Activated naive CD4-positive, alpha-beta T cell treated with anti-CD3 and anti-CD28 coated beads for 36 hours (primary cell): ENCODE measurements at regions of chr19 and their contacts with region 1.

Region 1: DNA sequence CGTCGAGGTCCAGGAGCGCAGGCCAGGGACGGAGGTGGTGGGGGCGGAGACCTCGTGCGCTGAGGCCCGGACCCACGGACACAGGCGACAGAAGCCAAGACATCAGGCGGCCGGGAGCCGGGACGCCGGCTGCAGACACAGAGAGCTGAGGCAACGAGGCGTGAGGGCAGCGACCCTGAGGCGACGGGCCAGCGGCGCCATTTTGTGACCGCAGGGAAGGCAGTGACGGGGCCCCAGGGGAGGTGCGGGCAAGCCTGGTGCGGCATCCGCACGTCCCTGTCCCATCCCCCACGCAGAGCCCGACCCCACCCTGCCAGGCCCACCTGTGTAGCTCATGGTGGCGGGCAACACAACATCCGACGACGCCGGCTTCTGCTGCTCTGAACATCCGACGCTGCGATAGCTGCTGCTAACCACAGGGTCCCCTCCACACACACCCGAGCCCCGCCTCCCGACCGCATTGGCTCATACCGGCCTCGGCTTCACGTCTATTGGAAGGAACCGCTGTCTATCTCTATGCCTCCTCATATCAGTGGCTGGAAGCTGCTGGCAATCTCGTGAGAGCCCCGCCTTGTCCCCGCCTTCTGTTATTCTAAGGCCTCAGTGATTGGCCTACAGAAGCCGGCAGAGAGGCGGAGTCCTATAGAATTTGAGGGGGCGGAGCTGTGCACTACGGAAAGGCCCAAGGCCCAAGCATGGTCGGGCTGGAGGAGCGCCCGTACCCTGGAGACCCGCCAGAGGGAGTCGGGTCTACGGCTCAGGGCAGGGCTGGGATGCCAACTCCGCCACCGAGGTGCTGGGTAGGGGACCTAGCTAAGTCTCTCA is at the start of gene AKAP8L:
- DNase-seq: peak; percentile 99
- H3K4me3 Mint-ChIP-seq: peak within 1 kb of the TSS; percentile 99
- H3K27ac Mint-ChIP-seq: peak within 1 kb of the TSS; percentile 92
- H3K4me1 Mint-ChIP-seq: peaks cover 38% of the 10 kb centered on the region
- H3K27me3 Mint-ChIP-seq: no peaks in the 10 kb centered on the region
- total RNA-seq, gene AKAP8L: 127 to 140 TPM

Region 2: GRCh38 chr19:14300303-14300702 is 1118.5 kb before region 1 on chr19:
- CTCF ChIA-PET with region 1: no interaction called
- intact Hi-C with region 1: no loop called
- DNase-seq: no peak
- H3K4me3 Mint-ChIP-seq: no peak overlapping the region
- H3K27ac Mint-ChIP-seq: no peak overlapping the region
- H3K4me1 Mint-ChIP-seq: no peaks in the 10 kb centered on the region
- H3K27me3 Mint-ChIP-seq: no peaks in the 10 kb centered on the region

Region 3: GRCh38 chr19:15125232-15126067 is 293.4 kb before region 1 on chr19:
- CTCF ChIA-PET with region 1: no interaction called
- intact Hi-C with region 1: loop called (anchors 1 kb)
- DNase-seq: peak; percentile 99
- H3K4me3 Mint-ChIP-seq: peak overlapping the region; percentile 88
- H3K27ac Mint-ChIP-seq: peak overlapping the region; percentile 94
- H3K4me1 Mint-ChIP-seq: peaks cover 31% of the 10 kb centered on the region
- H3K27me3 Mint-ChIP-seq: no peaks in the 10 kb centered on the region

Region 4: DNA sequence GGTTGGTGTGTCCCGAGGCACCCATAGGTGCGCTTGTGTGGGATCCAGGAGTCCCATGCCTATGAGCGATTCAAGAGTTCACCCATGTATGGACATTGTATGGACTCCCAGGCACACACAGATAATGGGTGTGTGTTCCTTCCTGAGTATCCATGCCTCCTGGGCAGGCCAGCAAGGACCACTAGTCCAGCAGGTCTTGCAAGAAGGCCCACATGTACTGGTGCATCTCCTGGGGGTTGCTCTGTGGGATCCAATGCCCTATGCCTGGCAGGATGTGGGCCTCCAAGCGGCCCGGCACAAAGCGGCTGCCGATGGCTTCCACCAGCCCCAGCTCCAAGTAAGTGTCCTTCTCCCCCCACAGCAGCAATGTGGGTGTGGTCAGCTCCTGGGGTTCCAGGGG is 191.5 kb before region 1 on chr19:
- CTCF ChIA-PET with region 1: no interaction called
- intact Hi-C with region 1: no loop called
- DNase-seq: no peak
- H3K4me3 Mint-ChIP-seq: no peak overlapping the region
- H3K27ac Mint-ChIP-seq: no peak overlapping the region
- H3K4me1 Mint-ChIP-seq: peaks cover 17% of the 10 kb centered on the region
- H3K27me3 Mint-ChIP-seq: peaks cover 29% of the 10 kb centered on the region

Region 5: GRCh38 chr19:15264061-15264932 is 154.5 kb before region 1 on chr19:
- CTCF ChIA-PET with region 1: no interaction called
- intact Hi-C with region 1: loop called (anchors 1 kb)
- DNase-seq: peak; percentile 82
- H3K4me3 Mint-ChIP-seq: no peak overlapping the region
- H3K27ac Mint-ChIP-seq: no peak overlapping the region
- H3K4me1 Mint-ChIP-seq: peaks cover 6% of the 10 kb centered on the region
- H3K27me3 Mint-ChIP-seq: no peaks in the 10 kb centered on the region

Region 6: GRCh38 chr19:15292847-15293582 is 125.8 kb before region 1 on chr19:
- CTCF ChIA-PET with region 1: no interaction called
- intact Hi-C with region 1: no loop called
- DNase-seq: no peak
- H3K4me3 Mint-ChIP-seq: peak overlapping the region; percentile 43
- H3K27ac Mint-ChIP-seq: peak overlapping the region; percentile 91
- H3K4me1 Mint-ChIP-seq: peaks cover 99% of the 10 kb centered on the region
- H3K27me3 Mint-ChIP-seq: no peaks in the 10 kb centered on the region

Region 7: GRCh38 chr19:15432629-15433518 is 14.1 kb after region 1 on chr19:
- CTCF ChIA-PET with region 1: interaction called, 11 read pairs
- intact Hi-C with region 1: loop called (anchors 1 kb)
- DNase-seq: peak; percentile 93
- H3K4me3 Mint-ChIP-seq: peak overlapping the region; percentile 95
- H3K27ac Mint-ChIP-seq: peak overlapping the region; percentile 90
- H3K4me1 Mint-ChIP-seq: peaks cover 29% of the 10 kb centered on the region
- H3K27me3 Mint-ChIP-seq: no peaks in the 10 kb centered on the region

Region 8: DNA sequence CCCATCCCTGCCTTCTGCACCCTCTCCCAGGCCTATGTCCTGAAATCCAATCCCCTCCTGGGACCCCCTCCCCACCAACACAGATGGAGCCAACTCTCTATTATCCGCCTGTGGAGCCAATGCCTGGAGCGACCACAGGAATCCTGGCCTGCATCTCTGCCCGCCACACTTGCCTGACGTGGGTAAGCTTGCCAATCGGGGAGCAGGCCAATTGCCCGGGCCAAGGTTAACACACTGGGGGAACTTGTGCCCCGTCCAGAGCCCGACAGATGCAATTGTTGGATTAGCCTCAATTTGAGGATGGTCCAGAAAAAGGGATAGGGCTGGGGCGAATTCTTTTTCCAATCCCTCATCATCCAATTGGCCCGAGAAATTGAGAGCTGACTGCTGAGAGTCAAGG is 25.0 kb after region 1 on chr19:
- CTCF ChIA-PET with region 1: no interaction called
- intact Hi-C with region 1: no loop called
- DNase-seq: no peak
- H3K4me3 Mint-ChIP-seq: no peak overlapping the region
- H3K27ac Mint-ChIP-seq: no peak overlapping the region
- H3K4me1 Mint-ChIP-seq: peaks cover 4% of the 10 kb centered on the region
- H3K27me3 Mint-ChIP-seq: no peaks in the 10 kb centered on the region

Region 9: DNA sequence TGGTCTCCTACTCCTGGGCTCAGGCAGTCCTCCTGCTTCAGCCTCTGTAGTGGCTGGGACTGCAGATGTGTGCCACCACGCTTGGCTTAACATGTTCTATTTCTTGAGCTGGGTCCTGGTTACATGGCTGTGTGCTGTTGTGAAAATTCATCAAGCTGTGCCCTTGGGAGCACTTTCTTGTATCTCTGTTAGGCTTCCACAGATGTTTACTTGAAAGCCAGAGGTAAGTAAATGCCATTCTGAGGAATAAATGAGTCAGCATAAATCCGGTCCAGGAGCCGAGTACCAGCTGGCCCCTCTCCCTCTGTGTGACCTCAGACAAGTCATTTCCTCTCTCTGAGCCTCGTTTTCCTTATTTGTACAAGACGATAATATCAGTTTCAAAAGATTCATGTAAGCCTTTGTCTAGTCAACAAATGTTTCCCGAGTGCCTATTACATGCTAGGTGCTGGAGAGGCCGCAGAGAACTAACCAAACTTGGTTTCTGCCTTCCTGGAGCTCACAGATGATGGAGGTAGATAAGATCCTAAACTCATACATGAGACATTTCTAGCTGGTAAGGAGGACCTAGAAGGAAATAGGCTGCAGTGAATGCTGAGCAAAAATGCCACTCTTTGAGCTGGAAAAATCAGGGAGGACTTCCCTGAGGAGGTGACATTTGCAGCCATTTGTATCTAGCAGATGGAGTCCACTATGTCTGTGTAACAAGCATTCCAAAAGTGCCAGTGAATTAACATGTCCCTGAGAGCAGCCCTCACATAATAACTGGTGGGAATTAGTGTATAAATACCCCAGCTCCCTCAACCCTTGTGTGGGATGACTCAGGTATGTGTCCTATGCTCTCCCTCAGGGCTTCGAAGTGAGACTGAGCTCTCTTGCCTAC is 48.3 kb after region 1 on chr19:
- CTCF ChIA-PET with region 1: interaction called, 15 read pairs
- intact Hi-C with region 1: loop called (anchors 1 kb)
- DNase-seq: peak; percentile 85
- H3K4me3 Mint-ChIP-seq: peak overlapping the region; percentile 34
- H3K27ac Mint-ChIP-seq: peak overlapping the region; percentile 93
- H3K4me1 Mint-ChIP-seq: peaks cover 56% of the 10 kb centered on the region
- H3K27me3 Mint-ChIP-seq: peaks cover 3% of the 10 kb centered on the region